ENCODE measurements at regions of chr10 and their contacts with region 1.

Region 1: GRCh38 chr10:43292755-43293676 is 26.2 kb upstream of the RASGEF1A start:
- DNase-seq: peak; percentile 56
- ATAC-seq: peak; percentile 90

Region 2: GRCh38 chr10:43000651-43001423 is 292.2 kb before region 1 on chr10:
- intact Hi-C with region 1: no loop called
- DNase-seq: no peak
- ATAC-seq: no peak

Region 3: GRCh38 chr10:43348511-43349312 is 55.7 kb after region 1 on chr10:
- intact Hi-C with region 1: loop called (anchors 10 kb)
- DNase-seq: peak; percentile 90
- ATAC-seq: peak; percentile 98

Region 4: GRCh38 chr10:43461950-43462349 is 168.9 kb after region 1 on chr10:
- intact Hi-C with region 1: loop called (anchors 5 kb)
- DNase-seq: no peak
- ATAC-seq: peak; percentile 85

Measured in Right ventricle myocardium superior (tissue), 1 donor.